ENCODE measurements at regions of chr18 and their contacts with region 1.

Region 1: DNA sequence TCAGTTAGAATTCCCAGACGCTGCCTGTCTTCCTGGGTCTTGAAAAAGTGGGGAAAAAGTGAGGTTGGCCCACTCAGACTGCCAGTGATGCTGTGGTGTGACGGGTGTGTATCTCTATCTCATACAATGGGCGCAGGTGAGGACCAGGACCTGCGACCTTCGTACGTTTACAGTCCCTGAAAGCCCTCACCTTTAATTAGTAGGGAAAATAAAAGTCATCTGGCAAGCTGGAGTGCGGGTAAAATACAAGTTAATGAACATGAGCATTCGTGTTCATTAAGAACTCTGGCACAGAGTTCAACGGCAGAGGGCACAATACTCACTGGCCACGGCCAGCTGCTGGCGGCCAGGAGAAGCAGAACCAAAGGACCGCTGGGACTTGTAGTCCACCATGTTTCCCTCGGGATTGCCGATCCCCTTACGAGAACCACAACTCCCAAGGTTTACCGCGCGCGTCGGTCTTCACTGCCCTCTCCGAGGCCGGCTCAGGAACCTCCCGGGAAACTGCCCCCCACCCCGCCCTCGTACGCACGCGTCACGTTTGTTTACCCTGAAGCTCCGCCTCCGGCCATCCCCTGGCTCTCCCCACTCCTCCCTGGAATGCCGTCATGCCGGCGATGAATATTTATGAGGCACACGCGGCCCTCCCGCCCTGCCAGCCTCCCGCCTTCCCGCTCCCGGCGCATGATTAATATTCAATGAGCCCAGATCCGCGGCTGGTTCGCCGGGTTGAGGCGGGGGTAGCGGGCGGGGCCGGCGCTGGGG is 488 bp upstream of the PHLPP1 start:
- DNase-seq: peak; percentile 98
- ATAC-seq: peak; percentile 81
- H3K4me3 ChIP-seq: peak overlapping the region; percentile 73
- H3K27ac ChIP-seq: peak overlapping the region; percentile 43
- H3K4me1 ChIP-seq: peaks cover 34% of the 10 kb centered on the region
- H3K27me3 ChIP-seq: no peaks in the 10 kb centered on the region
- CTCF ChIP-seq: peak; percentile 87

Region 2: DNA sequence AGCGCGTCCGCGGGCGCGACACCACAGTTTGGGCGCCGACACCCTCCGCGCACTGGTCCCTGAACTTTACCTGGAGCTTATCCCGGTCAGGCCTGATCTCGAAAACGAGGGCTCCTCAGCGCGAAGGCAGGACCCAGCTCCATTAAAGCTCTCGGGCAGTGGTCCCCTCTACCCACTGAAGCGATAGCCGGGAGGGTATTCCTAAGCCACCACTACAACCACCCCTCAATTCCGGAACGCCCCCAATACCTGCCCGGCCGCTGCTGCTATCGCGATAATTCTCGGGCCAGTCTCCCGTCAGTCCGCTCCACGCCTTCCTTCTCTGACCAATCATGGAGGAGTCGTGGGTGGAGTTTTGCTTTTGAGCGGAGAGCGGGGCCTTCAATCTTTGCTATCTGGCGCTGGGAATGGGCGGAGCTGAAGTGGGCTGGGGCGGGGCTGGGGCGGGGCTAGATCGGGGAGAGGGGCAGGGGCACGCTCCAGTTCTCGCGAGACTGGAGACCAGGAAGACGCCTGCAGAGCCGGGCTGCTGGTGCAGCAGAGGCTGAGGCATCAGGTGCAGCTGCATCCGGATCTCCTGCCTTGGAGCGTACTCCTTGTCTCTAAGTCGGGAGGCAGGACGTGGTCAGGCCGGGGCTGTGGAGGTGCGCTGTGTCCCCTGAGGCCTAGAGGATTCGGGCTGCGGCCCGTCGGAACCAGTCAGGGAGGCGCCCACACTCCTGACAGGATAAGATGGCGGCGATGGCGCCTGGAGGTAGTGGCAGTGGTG is 527.9 kb before region 1 on chr18 and contains the starts of genes PIGN and RELCH:
- CTCF ChIA-PET with region 1: no interaction called
- POLR2A ChIA-PET with region 1: no interaction called
- intact Hi-C with region 1: loop called (anchors 5 kb)
- DNase-seq: peak; percentile 98
- ATAC-seq: peak; percentile 84
- H3K4me3 ChIP-seq: peak within 1 kb of the TSS; percentile 99
- H3K27ac ChIP-seq: peak within 1 kb of the TSS; percentile 47
- H3K4me1 ChIP-seq: peaks cover 34% of the 10 kb centered on the region
- H3K27me3 ChIP-seq: no peaks in the 10 kb centered on the region
- CTCF ChIP-seq: no peak
- total RNA-seq, gene PIGN: 20.3 and 22.7 TPM in 2 replicates
- total RNA-seq, gene RELCH: 17.3 and 21.6 TPM in 2 replicates

Region 3: DNA sequence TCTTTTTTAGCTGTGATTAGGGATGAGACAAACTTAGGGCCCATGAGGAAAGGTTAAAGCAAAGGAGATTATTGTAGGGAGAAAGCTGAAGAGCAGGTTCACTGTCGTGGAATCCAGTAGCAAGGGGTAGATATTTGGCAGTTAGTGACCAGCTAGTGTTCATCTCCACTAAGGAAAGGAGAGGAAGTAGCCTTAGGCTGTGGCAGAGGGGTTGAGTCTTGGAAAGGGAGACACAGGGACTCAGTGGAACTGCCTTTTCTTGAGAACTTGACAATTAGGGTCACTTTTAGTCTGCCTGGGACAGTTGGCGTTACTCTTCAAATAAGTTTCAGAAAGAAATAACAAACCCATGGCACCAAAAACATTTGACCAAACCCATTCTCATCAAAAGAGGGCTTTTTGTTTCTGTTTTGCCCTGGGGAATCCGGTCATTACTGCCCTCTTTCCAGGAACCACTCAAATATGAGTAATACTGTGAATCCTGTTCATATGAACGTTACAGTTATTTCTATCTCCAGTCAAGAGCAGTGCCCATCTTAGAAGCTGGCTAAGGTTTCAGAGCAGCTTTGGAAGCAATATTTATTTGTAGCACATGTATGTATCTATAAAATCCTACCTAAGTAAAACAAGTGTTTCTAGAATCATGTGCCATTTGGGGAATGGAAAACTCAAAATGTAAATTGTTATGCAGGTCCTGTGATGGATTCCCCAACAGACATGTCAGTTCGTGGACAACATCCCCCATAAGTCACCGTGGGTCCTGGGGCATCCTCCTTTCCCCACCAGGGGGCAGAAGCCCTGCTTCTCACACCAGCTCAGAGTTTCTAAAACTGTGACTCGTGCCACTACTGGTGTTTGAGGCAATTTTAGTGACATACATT is 76.8 kb before region 1 on chr18:
- CTCF ChIA-PET with region 1: interaction called, 3 read pairs
- POLR2A ChIA-PET with region 1: no interaction called
- intact Hi-C with region 1: loop called (anchors 5 kb)
- DNase-seq: peak; percentile 64
- ATAC-seq: peak; percentile 49
- H3K4me3 ChIP-seq: no peak overlapping the region
- H3K27ac ChIP-seq: no peak overlapping the region
- H3K4me1 ChIP-seq: peaks cover 20% of the 10 kb centered on the region
- H3K27me3 ChIP-seq: no peaks in the 10 kb centered on the region
- CTCF ChIP-seq: peak; percentile 82

Region 4: DNA sequence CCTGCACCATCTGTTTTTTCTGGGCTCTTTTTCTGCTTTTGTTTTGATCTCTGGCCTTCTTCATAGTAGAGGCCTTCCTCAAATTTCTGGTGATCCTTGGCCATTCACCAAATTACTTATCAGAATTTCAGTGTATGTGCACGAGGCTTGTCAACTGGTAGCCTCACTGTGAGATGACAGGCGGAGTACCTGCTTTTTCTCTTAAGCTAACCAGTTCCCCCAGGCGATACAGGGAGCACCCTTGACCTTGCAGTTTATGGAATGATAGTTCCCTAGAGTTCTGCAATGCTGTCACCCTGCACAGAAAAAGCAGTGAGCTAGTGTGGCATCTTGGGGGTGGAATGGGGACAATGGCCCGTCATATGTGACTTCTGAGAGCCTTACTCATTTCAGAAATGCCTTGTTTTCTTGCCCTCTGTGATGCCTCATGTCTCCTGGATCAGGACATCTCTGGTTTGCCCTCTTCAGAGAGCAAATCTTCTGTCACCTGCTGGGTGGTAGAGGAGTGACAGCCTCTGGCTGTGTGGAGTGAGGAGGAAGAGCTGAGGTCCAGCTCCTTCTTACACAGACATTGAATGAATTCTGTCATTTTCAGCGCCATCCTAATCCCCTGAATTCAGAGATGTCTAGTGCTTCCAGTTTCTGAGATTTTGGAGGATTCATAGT is 55.3 kb before region 1 on chr18:
- CTCF ChIA-PET with region 1: no interaction called
- POLR2A ChIA-PET with region 1: no interaction called
- intact Hi-C with region 1: no loop called
- DNase-seq: no peak
- ATAC-seq: no peak
- H3K4me3 ChIP-seq: no peak overlapping the region
- H3K27ac ChIP-seq: no peak overlapping the region
- H3K4me1 ChIP-seq: peaks cover 15% of the 10 kb centered on the region
- H3K27me3 ChIP-seq: no peaks in the 10 kb centered on the region
- CTCF ChIP-seq: no peak

Region 5: GRCh38 chr18:62799977-62800376 is 85.1 kb after region 1 on chr18:
- CTCF ChIA-PET with region 1: interaction called, 5 read pairs
- POLR2A ChIA-PET with region 1: no interaction called
- intact Hi-C with region 1: loop called (anchors 1 kb)
- DNase-seq: no peak
- ATAC-seq: no peak; the same call in 1 of the 2 replicates
- H3K4me3 ChIP-seq: no peak overlapping the region
- H3K27ac ChIP-seq: peak overlapping the region; percentile 72
- H3K4me1 ChIP-seq: peaks cover 39% of the 10 kb centered on the region
- H3K27me3 ChIP-seq: no peaks in the 10 kb centered on the region
- CTCF ChIP-seq: no peak

Region 6: DNA sequence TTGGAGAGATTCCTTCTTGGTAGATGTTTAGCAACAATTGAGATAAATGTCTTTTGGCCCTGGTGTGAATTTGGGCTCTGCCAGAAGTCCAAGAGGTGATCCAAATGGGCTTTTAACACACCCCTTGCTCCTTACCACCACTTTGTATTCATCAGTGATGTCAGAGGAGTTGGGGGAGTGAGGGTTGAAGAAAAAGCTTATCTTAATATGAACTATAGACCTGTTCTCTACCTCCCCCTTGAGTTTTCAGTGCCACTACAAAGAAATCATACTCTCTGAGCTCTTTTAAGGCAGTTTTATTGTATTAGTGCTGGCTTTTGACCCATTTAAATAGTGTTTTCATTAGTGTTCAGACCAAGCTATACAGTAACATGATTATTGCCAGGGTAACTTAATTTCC is 229.6 kb after region 1 on chr18:
- CTCF ChIA-PET with region 1: interaction called, 17 read pairs
- POLR2A ChIA-PET with region 1: no interaction called
- intact Hi-C with region 1: no loop called
- DNase-seq: no peak
- ATAC-seq: peak; percentile 27; the same call in 1 of the 2 replicates
- H3K4me3 ChIP-seq: no peak overlapping the region
- H3K27ac ChIP-seq: no peak overlapping the region
- H3K4me1 ChIP-seq: no peaks in the 10 kb centered on the region
- H3K27me3 ChIP-seq: no peaks in the 10 kb centered on the region
- CTCF ChIP-seq: no peak; the same call in 1 of the 2 replicates

Region 7: DNA sequence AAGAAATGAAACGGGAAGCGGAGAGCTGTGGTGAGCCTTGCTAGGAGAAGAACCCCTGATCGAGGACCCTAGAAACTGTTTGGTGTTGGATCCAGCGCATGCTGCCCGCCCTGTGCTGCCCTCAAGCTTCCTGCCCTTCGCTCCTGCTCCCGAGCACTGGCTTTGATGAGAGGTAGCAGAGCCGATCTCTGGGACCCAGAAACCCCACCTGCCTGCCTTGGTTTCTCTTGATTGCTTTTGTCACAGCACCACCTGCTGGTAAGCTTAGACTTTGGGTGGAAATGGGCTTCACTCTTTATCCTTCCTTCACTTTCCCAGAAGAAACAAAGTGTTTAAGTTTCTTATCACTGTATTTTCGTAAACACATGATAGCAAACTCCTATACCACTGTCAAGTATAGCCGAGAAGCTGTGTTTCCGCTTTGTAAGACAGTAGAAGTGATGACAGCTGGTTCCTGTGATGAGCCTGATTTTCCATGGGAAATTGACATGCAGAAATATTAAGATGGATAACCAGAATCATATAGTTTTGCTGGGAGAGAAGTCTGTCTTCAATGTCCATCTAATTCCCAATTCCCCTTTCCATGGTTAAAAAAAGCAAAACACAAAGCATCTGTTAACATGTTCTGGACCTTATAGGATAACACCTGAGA is 267.9 kb after region 1 on chr18:
- CTCF ChIA-PET with region 1: interaction called, 7 read pairs
- POLR2A ChIA-PET with region 1: no interaction called
- intact Hi-C with region 1: loop called (anchors 1 kb)
- DNase-seq: peak; percentile 62
- ATAC-seq: peak; percentile 59
- H3K4me3 ChIP-seq: no peak overlapping the region
- H3K27ac ChIP-seq: no peak overlapping the region
- H3K4me1 ChIP-seq: peaks cover 15% of the 10 kb centered on the region
- H3K27me3 ChIP-seq: no peaks in the 10 kb centered on the region
- CTCF ChIP-seq: peak; percentile 93